Panc1 (cell line): ENCODE measurements at regions of chr20 and their contacts with region 1.

Region 1: DNA sequence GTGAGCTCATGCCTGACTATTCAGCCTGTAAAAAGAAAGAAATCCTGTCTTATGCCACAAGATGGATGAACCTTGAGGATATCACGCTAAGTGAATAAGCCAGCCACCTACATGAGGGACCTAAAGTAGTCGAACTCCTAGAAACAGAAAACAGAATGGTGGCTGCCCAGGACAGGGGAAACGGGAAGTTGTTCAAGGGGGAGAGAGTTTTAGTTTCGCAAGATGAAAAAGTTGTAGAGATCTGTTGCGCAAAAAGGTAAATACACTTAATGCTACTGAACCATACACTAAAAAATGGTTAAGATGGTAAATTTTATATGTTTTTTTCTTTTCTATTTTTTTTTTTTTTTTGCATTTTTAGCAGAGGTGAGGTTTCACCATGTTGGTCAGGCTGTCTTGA is 74.1 kb upstream of the RALY start:
- DNase-seq: no peak
- ATAC-seq: no peak
- H3K4me3 ChIP-seq: no peak overlapping the region
- H3K27ac ChIP-seq: no peak overlapping the region
- H3K4me1 ChIP-seq: 0 out of 2 replicates have a peak, but pooled peaks cover 2% of the 10 kb centered on the region
- H3K27me3 ChIP-seq: no peaks in the 10 kb centered on the region
- CTCF ChIP-seq: no peak

Region 2: DNA sequence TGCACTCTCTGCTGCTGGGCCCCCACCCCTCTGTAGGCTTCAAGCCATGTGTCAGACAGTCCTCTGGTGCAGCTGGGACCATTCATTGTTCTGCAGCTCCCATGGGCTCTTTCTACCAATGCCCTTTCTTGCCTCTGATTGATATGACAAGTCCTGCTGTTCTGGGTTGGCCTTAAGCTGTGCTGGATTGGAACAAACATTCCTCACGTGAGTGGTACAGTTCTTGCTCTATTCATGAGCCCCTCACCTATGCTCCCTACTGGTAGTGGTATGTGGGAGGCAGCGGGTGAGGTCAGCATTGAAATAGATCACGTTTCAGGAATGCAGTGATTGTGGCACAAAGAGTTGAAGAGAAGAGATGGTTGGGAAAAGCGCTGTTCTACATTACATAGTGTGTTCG is 25.3 kb after region 1 on chr20:
- CTCF ChIA-PET with region 1: no interaction called
- POLR2A ChIA-PET with region 1: no interaction called
- in situ Hi-C with region 1: no loop called
- intact Hi-C with region 1: no loop called
- DNase-seq: no peak
- ATAC-seq: no peak
- H3K4me3 ChIP-seq: no peak overlapping the region
- H3K27ac ChIP-seq: no peak overlapping the region
- H3K4me1 ChIP-seq: no peaks in the 10 kb centered on the region
- H3K27me3 ChIP-seq: no peaks in the 10 kb centered on the region
- CTCF ChIP-seq: no peak

Region 3: DNA sequence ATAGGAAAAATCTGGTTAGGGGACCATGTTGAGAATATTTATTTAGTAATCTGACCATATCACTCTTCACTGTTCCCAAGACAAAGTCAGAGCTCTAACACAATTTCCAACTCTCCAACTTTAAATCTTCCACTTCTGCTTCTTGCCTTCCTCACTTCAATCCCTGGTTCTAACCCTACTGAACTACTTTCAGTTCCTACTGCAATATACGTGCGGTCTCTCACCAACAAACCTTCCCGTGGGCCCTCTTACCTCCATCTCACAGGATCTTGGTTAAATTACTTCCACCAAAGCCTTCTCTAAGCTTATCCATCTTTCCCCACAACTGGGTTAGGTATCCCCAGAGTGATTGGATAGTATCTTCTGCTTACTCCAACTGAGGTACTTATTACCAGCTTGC is 184.4 kb after region 1 on chr20:
- CTCF ChIA-PET with region 1: no interaction called
- POLR2A ChIA-PET with region 1: interaction called, 12 read pairs
- in situ Hi-C with region 1: no loop called
- intact Hi-C with region 1: no loop called
- DNase-seq: no peak
- ATAC-seq: no peak
- H3K4me3 ChIP-seq: no peak overlapping the region
- H3K27ac ChIP-seq: no peak overlapping the region
- H3K4me1 ChIP-seq: peaks cover 11% of the 10 kb centered on the region; the same call in 1 of the 2 replicates
- H3K27me3 ChIP-seq: no peaks in the 10 kb centered on the region
- CTCF ChIP-seq: no peak